PC-3 (cell line): ENCODE measurements at regions of chr1 and their contacts with region 1.

Region 1: DNA sequence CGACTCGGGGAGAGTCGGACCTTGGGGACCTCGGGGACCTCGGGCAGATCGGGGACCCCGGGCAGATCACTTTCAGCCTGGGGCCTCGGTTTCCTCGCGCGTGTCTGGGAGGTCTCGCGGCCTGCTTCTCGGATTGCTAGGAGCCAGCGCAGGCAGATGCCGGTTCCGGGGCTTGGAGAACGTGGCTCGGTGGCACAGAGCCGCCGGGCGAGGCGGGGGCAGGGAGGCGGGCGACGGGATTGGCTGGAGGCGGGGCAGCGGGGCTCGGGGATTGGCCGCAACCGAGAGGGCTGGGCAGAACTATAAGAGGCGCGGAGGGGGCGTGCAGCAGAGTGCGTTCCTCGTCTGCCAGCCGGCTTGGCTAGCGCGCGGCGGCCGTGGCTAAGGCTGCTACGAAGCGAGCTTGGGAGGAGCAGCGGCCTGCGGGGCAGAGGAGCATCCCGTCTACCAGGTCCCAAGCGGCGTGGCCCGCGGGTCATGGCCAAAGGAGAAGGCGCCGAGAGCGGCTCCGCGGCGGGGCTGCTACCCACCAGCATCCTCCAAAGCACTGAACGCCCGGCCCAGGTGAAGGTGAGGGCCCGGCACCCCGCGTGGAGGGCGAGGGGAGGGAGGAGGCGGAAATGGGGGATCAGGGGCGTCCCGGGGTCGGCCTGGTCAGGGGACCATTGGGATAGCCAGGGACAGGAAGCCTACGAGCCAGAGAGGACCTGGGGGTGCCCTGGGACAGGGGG is at the start of gene MFSD2A:
- DNase-seq: peak; percentile 90
- ATAC-seq: peak; percentile 86
- H3K4me3 ChIP-seq: peak within 1 kb of the TSS; percentile 88
- H3K27ac ChIP-seq: peak within 1 kb of the TSS; percentile 4; the same call in 1 of the 2 replicates
- H3K4me1 ChIP-seq: peaks cover 17% of the 10 kb centered on the region
- H3K27me3 ChIP-seq: no peaks in the 10 kb centered on the region
- CTCF ChIP-seq: no peak
- total RNA-seq, gene MFSD2A: 8.6 and 12.1 TPM in 2 replicates

Region 2: GRCh38 chr1:39623053-39623452 is 331.9 kb before region 1 on chr1:
- CTCF ChIA-PET with region 1: no interaction called
- POLR2A ChIA-PET with region 1: interaction called, 30 read pairs
- intact Hi-C with region 1: no loop called
- DNase-seq: no peak
- ATAC-seq: no peak
- H3K4me3 ChIP-seq: no peak overlapping the region
- H3K27ac ChIP-seq: no peak overlapping the region
- H3K4me1 ChIP-seq: no peaks in the 10 kb centered on the region
- H3K27me3 ChIP-seq: peaks cover 26% of the 10 kb centered on the region; the same call in 1 of the 2 replicates
- CTCF ChIP-seq: no peak

Region 3: DNA sequence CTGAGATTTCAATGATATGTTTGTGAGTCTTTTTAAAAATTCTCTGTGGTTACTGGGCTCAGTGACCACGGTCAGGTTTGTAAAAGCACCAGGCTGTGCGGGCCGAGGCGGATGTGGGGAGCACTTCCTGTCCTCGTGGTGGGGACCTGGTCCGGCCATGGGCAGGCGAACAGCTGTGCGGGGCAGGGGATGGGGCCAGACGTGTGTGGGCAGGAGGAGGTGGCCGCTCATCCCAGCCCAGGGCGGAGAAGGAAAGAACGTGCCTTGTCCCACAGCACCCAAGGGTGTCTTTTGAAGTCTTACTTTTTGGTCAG is 178.6 kb before region 1 on chr1:
- CTCF ChIA-PET with region 1: no interaction called
- POLR2A ChIA-PET with region 1: no interaction called
- intact Hi-C with region 1: no loop called
- DNase-seq: no peak
- ATAC-seq: no peak
- H3K4me3 ChIP-seq: no peak overlapping the region
- H3K27ac ChIP-seq: no peak overlapping the region
- H3K4me1 ChIP-seq: no peaks in the 10 kb centered on the region
- H3K27me3 ChIP-seq: no peaks in the 10 kb centered on the region
- CTCF ChIP-seq: no peak

Region 4: DNA sequence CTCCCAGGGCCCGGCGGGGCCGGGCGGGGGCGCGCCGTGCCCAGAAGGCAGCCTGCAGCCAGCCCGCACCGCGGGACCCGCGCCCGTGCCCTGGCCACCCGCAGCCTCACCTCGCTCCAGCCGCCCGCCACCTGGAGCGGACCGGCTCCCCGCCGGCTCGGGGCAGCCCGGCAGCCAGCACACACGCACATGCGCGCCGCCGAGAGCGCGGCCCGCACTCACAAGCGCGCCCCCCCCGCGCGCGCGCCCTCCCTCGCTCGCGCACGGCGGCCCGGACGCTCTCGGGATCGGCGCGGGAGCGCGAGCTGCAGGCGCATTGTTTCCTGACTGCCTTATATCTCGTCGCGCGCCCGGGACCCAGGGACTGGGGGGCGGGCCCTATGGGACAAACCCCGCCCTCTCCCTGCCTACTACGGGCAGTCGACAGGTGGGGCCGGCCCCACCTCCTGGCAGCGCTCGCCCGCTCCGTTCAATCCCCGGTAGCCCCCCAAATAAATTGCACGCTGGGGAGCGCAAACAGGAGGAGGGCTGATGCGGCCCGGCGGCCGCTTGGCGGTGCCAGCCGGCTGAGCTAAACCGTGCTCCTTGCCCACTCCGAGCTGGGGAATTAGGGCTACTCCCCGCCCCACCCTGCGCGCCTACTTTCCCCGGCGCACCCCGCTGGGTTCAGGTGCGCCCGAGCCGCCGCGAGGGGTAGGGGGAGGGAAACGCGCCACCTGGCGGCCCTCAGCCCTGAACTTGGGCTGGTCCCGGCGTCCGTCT is 53.1 kb before region 1 on chr1 and contains the start of gene MYCL:
- CTCF ChIA-PET with region 1: no interaction called
- POLR2A ChIA-PET with region 1: no interaction called
- intact Hi-C with region 1: no loop called
- DNase-seq: peak; percentile 94
- ATAC-seq: peak; percentile 87
- H3K4me3 ChIP-seq: peak within 1 kb of the TSS; percentile 86
- H3K27ac ChIP-seq: 0 out of 2 replicates have a peak within 1 kb of the TSS, but pooled peaks have one; percentile 10
- H3K4me1 ChIP-seq: peaks cover 7% of the 10 kb centered on the region; the same call in 1 of the 2 replicates
- H3K27me3 ChIP-seq: no peaks in the 10 kb centered on the region
- CTCF ChIP-seq: peak; percentile 87
- total RNA-seq, gene MYCL: 4.0 and 6.6 TPM in 2 replicates